ENCODE measurements at regions of chr5 and their contacts with region 1.

Region 1: DNA sequence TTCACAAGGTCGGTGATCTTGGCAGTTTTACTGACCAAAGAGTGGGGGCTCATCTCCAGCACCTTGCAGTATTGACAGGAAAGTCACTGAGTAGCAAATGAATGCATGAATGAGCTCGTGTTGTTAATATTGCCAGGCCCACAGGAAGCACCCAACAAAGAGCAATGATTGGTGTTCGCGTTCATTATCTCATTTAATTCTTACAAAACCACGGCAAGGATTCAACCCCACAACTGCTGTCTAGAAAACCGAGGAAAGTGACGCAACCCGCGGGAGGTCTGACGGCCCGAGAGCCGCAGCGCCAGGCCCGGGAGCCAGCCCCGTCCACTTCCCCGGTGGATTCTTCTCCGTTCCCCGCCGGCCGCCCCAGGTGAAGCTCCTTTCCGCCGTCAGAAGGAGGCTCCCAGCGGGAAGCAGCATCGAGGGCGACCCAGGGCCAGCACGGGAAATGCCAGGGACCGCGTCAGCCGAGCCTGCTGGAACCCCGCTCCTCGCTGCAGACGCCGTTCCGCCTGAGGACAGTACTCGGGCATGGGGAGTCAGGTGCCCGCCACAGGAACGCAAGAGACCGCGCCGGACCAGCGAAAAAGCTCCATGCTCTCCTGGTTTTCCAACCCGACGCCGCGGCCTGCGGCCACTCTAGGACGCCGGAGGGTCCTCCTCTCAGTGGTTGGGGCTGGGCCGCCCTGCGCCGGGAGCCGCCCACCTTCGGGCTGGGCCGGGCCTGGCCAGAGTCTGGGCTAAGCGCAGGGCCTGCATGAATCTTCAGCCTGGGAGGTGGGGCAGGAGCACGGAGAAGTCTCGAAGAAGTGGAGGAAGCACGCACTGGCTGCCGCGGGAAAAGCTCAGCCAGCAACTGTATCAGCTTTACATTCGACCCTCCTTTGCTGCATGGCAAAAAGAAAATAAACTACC is 19.8 kb upstream of the FER start:
- DNase-seq: peak; percentile 91
- H3K4me3 Mint-ChIP-seq: peak overlapping the region; percentile 77
- H3K27ac Mint-ChIP-seq: peak overlapping the region; percentile 99
- H3K4me1 Mint-ChIP-seq: peaks cover 27% of the 10 kb centered on the region
- H3K27me3 Mint-ChIP-seq: no peaks in the 10 kb centered on the region
- CTCF ChIP-seq: no peak

Region 2: DNA sequence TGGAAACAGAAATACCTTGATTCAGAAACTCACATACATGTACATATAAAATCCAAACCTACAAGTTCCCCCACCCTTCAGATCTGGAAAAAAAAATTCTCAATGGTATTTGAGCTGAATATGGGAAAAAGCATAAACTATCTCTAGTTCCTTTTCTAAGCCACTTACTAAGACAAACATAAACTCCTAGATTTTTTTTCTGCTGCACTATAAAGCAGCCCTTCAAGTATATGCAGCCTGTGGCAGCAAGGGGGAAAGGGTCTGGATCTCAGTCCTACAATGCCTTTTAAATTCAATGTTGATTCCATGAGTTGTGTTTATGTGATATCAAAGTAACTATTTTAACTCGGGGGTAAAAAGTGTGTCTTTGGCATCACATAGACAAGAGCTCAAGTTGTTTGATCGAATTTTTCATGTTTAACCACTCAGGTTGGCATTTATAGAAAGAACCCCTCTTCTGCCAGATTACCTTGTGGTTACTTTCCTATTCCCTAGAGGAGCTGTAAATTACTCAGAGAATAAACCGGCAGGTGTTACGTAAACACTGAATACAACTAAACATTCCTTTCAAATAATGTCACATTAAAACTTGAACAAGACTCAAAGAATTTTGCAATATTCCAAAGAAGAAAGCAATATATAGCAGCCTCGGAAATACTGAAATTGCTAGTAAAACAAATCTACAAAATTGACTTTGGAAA is 72.0 kb before region 1 on chr5:
- CTCF ChIA-PET with region 1: no interaction called
- POLR2A ChIA-PET with region 1: interaction called, 18 read pairs
- intact Hi-C with region 1: loop called (anchors 5 kb)
- DNase-seq: peak; percentile 85
- H3K4me3 Mint-ChIP-seq: peak overlapping the region; percentile 28
- H3K27ac Mint-ChIP-seq: no peak overlapping the region
- H3K4me1 Mint-ChIP-seq: peaks cover 21% of the 10 kb centered on the region
- H3K27me3 Mint-ChIP-seq: no peaks in the 10 kb centered on the region
- CTCF ChIP-seq: no peak

Region 3: DNA sequence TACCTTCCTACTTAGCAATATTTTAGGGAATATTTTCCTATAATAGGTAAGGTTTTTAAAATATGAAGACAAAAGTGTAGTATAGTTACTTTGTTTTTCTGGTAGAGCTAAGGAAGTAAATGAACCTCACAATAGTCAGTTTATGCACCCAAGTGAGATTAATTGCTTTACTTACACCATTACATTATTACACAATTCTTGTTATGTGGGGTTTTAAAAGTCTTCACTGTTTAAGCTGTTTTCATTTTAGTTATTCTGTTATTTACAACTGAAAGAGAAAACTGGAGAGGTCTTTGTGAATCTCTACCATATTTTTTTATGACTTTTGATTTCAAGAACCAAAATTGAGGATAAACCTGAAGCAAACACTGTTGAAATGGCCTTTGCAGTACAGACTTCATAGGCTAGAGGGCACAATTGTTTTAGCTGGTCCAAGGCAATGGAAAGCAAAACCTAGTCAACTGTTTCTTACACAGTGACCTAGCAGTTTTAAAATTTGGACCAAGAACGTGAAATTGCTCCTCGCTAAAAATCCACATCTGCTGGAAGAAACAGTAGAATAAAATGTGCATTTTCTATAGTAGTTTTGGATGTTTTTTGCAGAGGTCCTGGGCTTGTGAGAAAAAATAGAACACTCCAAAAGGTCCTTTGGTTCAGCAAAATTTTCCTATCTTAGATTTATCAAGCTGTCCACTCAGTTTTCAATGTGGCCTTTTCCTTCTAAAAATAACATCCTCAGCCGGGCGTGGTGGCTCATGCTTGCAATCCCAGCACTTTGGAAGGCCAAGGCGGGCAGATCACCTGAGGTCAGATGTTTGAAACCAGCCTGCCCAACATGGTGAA is 46.6 kb before region 1 on chr5:
- CTCF ChIA-PET with region 1: interaction called, 15 read pairs
- POLR2A ChIA-PET with region 1: interaction called, 11 read pairs
- intact Hi-C with region 1: no loop called
- DNase-seq: peak; percentile 73
- H3K4me3 Mint-ChIP-seq: no peak overlapping the region
- H3K27ac Mint-ChIP-seq: no peak overlapping the region
- H3K4me1 Mint-ChIP-seq: no peaks in the 10 kb centered on the region
- H3K27me3 Mint-ChIP-seq: peaks cover 16% of the 10 kb centered on the region
- CTCF ChIP-seq: peak; percentile 69

Region 4: GRCh38 chr5:108711898-108712297 is 16.0 kb before region 1 on chr5:
- CTCF ChIA-PET with region 1: interaction called, 4 read pairs
- POLR2A ChIA-PET with region 1: interaction called, 28 read pairs
- intact Hi-C with region 1: no loop called
- DNase-seq: no peak
- H3K4me3 Mint-ChIP-seq: no peak overlapping the region
- H3K27ac Mint-ChIP-seq: no peak overlapping the region
- H3K4me1 Mint-ChIP-seq: no peaks in the 10 kb centered on the region
- H3K27me3 Mint-ChIP-seq: no peaks in the 10 kb centered on the region
- CTCF ChIP-seq: no peak

Region 5: GRCh38 chr5:108748401-108749127 is 20.7 kb after region 1 on chr5:
- CTCF ChIA-PET with region 1: interaction called, 7 read pairs
- POLR2A ChIA-PET with region 1: interaction called, 206 read pairs
- intact Hi-C with region 1: loop called (anchors 1 kb)
- DNase-seq: peak; percentile 98
- H3K4me3 Mint-ChIP-seq: peak overlapping the region; percentile 87
- H3K27ac Mint-ChIP-seq: peak overlapping the region; percentile 99
- H3K4me1 Mint-ChIP-seq: peaks cover 6% of the 10 kb centered on the region
- H3K27me3 Mint-ChIP-seq: no peaks in the 10 kb centered on the region
- CTCF ChIP-seq: no peak

Region 6: GRCh38 chr5:108867656-108868055 is 139.7 kb after region 1 on chr5:
- CTCF ChIA-PET with region 1: no interaction called
- POLR2A ChIA-PET with region 1: interaction called, 16 read pairs
- intact Hi-C with region 1: no loop called
- DNase-seq: no peak
- H3K4me3 Mint-ChIP-seq: no peak overlapping the region
- H3K27ac Mint-ChIP-seq: no peak overlapping the region
- H3K4me1 Mint-ChIP-seq: peaks cover under 1% of the 10 kb centered on the region
- H3K27me3 Mint-ChIP-seq: no peaks in the 10 kb centered on the region
- CTCF ChIP-seq: no peak

Region 7: GRCh38 chr5:109455598-109456096 is 727.7 kb after region 1 on chr5:
- CTCF ChIA-PET with region 1: interaction called, 4 read pairs
- POLR2A ChIA-PET with region 1: interaction called, 11 read pairs
- intact Hi-C with region 1: no loop called
- DNase-seq: peak; percentile 99
- H3K4me3 Mint-ChIP-seq: peak overlapping the region; percentile 8
- H3K27ac Mint-ChIP-seq: peak overlapping the region; percentile 72
- H3K4me1 Mint-ChIP-seq: peaks cover 7% of the 10 kb centered on the region
- H3K27me3 Mint-ChIP-seq: no peaks in the 10 kb centered on the region
- CTCF ChIP-seq: no peak